HepG2 (cell line): ENCODE measurements at regions of chrX and their contacts with region 1.

Region 1: DNA sequence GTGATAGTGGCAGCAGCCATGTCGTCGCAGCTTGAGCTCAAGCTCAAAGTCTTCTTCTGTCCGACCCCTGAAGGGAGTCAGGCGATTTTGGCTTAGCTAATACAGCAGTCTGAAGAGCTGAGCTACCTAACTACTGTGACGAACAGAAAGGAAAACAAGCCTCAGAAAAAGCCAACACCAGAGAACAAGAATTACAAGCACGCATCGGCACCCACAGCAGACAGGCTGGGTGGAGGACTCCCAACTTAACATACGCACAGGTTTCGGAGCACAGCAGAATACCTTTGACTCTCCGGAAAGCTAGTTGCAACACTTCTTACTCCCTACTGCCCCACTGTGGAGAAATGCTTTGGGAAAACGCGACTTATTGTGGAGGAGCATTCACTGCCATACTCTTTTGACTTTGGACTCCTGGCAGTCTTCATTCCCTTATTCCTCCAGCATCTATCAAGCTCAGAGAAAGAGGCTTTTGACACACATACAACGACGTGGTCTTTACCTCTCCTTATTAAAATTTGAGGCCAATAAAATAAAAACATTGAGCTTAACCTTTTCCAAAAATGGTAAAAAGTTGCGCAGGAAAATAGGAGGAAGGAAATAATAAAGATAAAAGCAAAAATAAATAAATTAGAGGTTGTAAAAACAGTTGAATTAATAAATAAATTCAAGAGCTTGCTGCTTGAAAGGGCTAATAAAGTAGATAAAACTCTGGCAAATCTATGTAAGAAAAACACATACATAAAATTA is 41.3 kb upstream of the GPC3 start:
- DNase-seq: peak; percentile 84
- ATAC-seq: peak; percentile 68
- H3K4me3 ChIP-seq: peak overlapping the region; percentile 37 to 65 (median 57); a peak in 5 of 6 replicates
- H3K27ac ChIP-seq: peak overlapping the region; percentile 76
- H3K4me1 ChIP-seq: peaks cover 46% of the 10 kb centered on the region
- H3K27me3 ChIP-seq: no peaks in the 10 kb centered on the region
- CTCF ChIP-seq: peak; percentile 80
- EP300 ChIP-seq: no peak
- POLR2A ChIP-seq: peak in 1 of 2 experiments; percentile 43; a peak in 1 of 4 replicates
- RAD21 ChIP-seq: peak; percentile 49; the same call in 1 of the 2 replicates

Region 2: GRCh38 chrX:133834771-133835170 is 192.0 kb before region 1 on chrX:
- CTCF ChIA-PET with region 1: no interaction called
- POLR2A ChIA-PET with region 1: no interaction called
- in situ Hi-C with region 1: no loop called
- intact Hi-C with region 1: loop called (anchors 10 kb)
- DNase-seq: no peak
- ATAC-seq: no peak
- H3K4me3 ChIP-seq: no peak overlapping the region
- H3K27ac ChIP-seq: no peak overlapping the region
- H3K4me1 ChIP-seq: peaks cover 36% of the 10 kb centered on the region
- H3K27me3 ChIP-seq: no peaks in the 10 kb centered on the region
- CTCF ChIP-seq: no peak
- EP300 ChIP-seq: no peak
- POLR2A ChIP-seq: no peak
- RAD21 ChIP-seq: no peak